MCF 10A (cell line): ENCODE measurements at regions of chr4 and their contacts with region 1.

Region 1: GRCh38 chr4:161252520-161253141 is 911.2 kb downstream of the FSTL5 start:
- DNase-seq: peak; percentile 52
- H3K4me3 Mint-ChIP-seq: no peak overlapping the region
- H3K27ac Mint-ChIP-seq: no peak overlapping the region
- H3K4me1 Mint-ChIP-seq: no peaks in the 10 kb centered on the region
- H3K27me3 Mint-ChIP-seq: no peaks in the 10 kb centered on the region
- CTCF ChIP-seq: peak; percentile 63

Region 2: DNA sequence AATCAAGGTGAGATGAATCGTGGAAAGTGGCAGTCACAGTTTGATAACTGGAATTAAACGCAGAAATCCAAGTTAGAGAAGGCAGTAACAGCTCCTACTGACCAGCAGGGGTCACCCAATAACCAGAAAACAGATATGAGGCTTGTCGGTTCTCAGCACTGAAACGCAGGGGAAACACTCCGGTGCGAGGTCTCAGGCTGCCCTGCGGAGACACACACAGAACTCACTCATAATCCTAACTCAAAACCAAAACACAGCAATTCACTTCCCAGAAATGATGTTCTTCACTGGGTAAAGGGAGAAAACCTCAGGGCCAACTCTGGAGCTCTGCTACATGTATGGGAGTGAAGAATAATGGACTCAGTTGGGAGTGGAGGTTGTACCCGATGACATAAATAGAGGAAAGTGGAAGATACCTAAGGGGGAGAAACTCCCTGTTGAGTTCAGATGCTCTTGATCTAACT is 1765.3 kb before region 1 on chr4:
- CTCF ChIA-PET with region 1: interaction called, 5 read pairs
- POLR2A ChIA-PET with region 1: no interaction called
- intact Hi-C with region 1: loop called (anchors 5 kb)
- DNase-seq: peak; percentile 85
- H3K4me3 Mint-ChIP-seq: peak overlapping the region; percentile 24
- H3K27ac Mint-ChIP-seq: no peak overlapping the region
- H3K4me1 Mint-ChIP-seq: peaks cover 25% of the 10 kb centered on the region
- H3K27me3 Mint-ChIP-seq: peaks cover 10% of the 10 kb centered on the region
- CTCF ChIP-seq: peak; percentile 63

Region 3: DNA sequence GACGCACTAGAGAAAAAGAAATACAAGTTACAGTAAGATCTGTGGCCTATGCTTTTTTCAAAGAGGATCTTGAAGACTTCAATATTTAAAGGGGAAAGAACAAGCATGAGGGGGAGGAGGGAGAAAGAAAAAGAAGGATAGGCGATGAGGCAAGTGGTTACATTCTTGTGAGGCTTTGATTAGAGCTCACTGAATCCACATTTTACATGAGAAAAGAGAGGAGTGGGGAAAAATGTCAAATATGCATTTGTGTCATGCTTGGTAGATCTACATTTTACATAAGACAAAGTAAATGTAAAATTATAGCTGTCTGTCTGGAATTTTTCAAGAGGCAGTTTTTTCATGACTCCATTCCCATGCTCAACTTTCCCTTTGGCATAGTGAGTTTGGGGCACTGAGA is 54.7 kb before region 1 on chr4:
- CTCF ChIA-PET with region 1: no interaction called
- POLR2A ChIA-PET with region 1: no interaction called
- intact Hi-C with region 1: no loop called
- DNase-seq: no peak
- H3K4me3 Mint-ChIP-seq: no peak overlapping the region
- H3K27ac Mint-ChIP-seq: no peak overlapping the region
- H3K4me1 Mint-ChIP-seq: no peaks in the 10 kb centered on the region
- H3K27me3 Mint-ChIP-seq: no peaks in the 10 kb centered on the region
- CTCF ChIP-seq: no peak

Region 4: DNA sequence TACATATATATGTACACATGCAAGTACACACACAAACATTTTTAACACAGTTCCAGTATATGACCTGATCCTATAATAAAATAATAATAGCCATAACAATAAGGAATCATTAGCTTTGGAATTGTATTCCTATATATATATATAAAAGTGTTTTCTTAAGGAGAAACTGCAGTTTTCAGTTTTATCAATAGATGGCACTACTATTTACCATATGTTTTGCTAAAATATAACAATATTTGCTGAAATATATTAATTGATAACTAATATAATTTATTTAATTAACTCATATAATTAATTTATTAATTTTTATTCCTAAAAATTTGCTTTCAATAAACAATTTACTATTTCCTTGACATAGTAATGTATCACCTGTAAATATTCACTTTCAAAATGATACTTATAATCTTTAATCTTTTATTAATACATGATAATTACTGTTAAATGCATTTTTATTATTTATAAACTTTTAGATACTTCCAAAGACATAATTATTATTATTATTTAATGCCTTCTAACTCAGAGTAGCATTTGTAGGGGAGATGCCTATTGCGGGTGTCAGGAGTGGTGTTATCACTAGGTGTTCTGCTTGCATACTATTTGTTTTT is 311.7 kb after region 1 on chr4:
- CTCF ChIA-PET with region 1: interaction called, 4 read pairs
- POLR2A ChIA-PET with region 1: no interaction called
- intact Hi-C with region 1: loop called (anchors 10 kb)
- DNase-seq: peak; percentile 17
- H3K4me3 Mint-ChIP-seq: no peak overlapping the region
- H3K27ac Mint-ChIP-seq: no peak overlapping the region
- H3K4me1 Mint-ChIP-seq: peaks cover 6% of the 10 kb centered on the region
- H3K27me3 Mint-ChIP-seq: no peaks in the 10 kb centered on the region
- CTCF ChIP-seq: peak; percentile 38

Region 5: GRCh38 chr4:162163852-162164759 is 911.5 kb after region 1 on chr4 and contains the start of gene FSTL5:
- CTCF ChIA-PET with region 1: interaction called, 10 read pairs
- POLR2A ChIA-PET with region 1: no interaction called
- intact Hi-C with region 1: loop called (anchors 1 kb)
- DNase-seq: peak; percentile 82
- H3K4me3 Mint-ChIP-seq: peak within 1 kb of the TSS; percentile 79
- H3K27ac Mint-ChIP-seq: no peak within 1 kb of the TSS
- H3K4me1 Mint-ChIP-seq: peaks cover 10% of the 10 kb centered on the region
- H3K27me3 Mint-ChIP-seq: no peaks in the 10 kb centered on the region
- CTCF ChIP-seq: no peak
- total RNA-seq, gene FSTL5: not detected in 2 replicates

Region 6: GRCh38 chr4:162461952-162462351 is 1209.3 kb after region 1 on chr4:
- CTCF ChIA-PET with region 1: interaction called, 7 read pairs
- POLR2A ChIA-PET with region 1: no interaction called
- intact Hi-C with region 1: loop called (anchors 2 kb)
- DNase-seq: peak; percentile 15
- H3K4me3 Mint-ChIP-seq: no peak overlapping the region
- H3K27ac Mint-ChIP-seq: no peak overlapping the region
- H3K4me1 Mint-ChIP-seq: peaks cover under 1% of the 10 kb centered on the region
- H3K27me3 Mint-ChIP-seq: no peaks in the 10 kb centered on the region
- CTCF ChIP-seq: peak; percentile 33